ENCODE measurements at regions of chr11 and their contacts with region 1.

Region 1: DNA sequence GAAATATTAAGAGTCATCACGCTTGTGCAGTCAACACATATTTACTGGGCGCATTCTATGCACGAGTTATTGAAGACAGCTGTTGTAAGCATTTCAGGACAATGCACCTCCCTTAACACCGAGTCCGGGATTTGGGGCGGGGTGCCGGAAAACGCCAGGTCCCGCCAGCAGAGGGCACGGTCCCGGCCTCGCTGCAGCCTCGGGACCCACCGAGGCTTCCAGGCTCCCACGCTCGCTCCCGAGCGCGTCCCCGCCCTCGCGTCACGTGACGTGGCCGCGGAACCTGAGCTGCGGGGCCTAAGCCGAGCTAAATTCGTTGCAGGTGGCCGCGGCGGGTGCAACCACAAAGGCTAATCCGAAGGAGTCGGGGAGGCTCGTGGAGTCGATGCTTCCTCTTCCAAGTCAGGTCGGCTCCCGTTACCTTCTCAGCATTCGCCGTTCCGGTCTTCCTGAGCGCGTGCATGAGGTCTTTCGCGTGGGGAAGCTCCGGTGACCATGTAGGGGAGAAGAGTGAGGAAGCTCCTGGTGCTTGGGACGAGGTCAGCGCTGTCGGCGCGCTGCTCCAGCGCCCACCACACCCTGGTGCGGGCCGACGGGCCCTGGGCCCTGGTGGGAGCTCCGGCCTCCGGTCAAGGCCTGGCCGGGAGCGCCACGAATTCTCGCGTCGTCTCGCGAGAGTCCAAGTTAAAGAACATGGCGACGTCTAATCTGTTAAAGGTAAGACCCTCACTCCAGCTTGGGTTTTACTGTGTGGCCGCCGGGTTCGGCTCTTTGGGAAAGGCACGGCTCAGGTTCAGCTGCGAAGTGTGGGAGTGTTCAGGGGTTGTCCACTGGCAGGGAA is at the start of gene CUL5:
- DNase-seq: peak; percentile 95
- ATAC-seq: peak; percentile 91
- H3K4me3 ChIP-seq: peak within 1 kb of the TSS; percentile 79 to 100 (median 99)
- H3K4me3 Mint-ChIP-seq: peak within 1 kb of the TSS; percentile 99
- H3K27ac ChIP-seq: peak within 1 kb of the TSS; percentile 95 to 97
- H3K27ac Mint-ChIP-seq: peak within 1 kb of the TSS; percentile 98
- H3K4me1 ChIP-seq: peaks cover 18 to 20% of the 10 kb centered on the region in 2 donors
- H3K4me1 Mint-ChIP-seq: peaks cover 26% of the 10 kb centered on the region
- H3K27me3 ChIP-seq: no peaks in the 10 kb centered on the region
- H3K27me3 Mint-ChIP-seq: no peaks in the 10 kb centered on the region
- CTCF ChIP-seq: peak; percentile 80
- total RNA-seq, gene CUL5: 44.1 and 47.0 TPM in 2 replicates

Region 2: DNA sequence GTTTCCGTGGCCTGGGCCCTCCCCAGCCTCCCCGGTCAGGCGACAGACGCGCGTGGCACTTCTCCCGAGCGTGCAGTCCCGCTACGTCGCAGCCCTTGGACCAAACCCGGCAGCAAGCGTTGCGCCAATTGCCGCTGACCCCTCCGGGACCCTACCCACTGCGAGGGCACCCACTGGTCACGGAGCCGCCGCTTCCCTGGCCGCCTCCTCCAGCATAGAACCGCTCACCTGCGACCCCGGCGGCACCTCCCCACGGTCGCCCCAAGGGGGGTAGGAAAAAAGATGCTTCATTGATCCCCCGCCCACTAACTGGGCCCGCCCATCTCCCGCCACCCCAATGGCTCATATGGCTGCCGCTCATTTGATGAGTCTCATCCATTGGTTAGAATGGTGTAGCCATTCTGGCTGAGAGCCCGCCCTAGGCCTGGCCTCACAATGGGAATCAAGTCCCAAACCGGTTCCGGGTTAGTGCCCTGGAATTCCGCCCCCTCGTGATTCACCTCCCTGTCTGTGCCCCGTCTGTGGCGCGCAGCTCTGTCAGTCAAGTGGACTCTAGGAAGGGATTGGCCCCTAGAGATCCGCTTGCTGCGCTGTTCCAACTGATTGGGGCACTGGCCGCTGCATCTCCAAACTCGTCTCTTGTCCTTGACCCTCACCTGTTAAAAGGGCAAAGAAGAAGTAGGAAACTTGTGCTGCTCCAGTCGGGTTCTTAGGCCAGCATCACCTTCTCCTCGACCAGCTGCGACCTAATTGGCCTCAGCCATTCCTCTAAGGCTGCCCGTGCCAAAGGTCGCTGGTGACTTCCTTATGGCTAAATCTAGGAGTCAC is 1986.7 kb before region 1 on chr11 and contains the start of gene MSANTD4:
- CTCF ChIA-PET with region 1: no interaction called
- POLR2A ChIA-PET with region 1: no interaction called
- intact Hi-C with region 1: loop called (anchors 5 kb)
- DNase-seq: peak; percentile 96
- ATAC-seq: peak; percentile 96
- H3K4me3 ChIP-seq: peak within 1 kb of the TSS; percentile 66 to 96 (median 82)
- H3K4me3 Mint-ChIP-seq: peak within 1 kb of the TSS; percentile 91
- H3K27ac ChIP-seq: peak within 1 kb of the TSS; percentile 71 to 83
- H3K27ac Mint-ChIP-seq: peak within 1 kb of the TSS; percentile 86
- H3K4me1 ChIP-seq: peaks cover 11 to 17% of the 10 kb centered on the region in 2 donors
- H3K4me1 Mint-ChIP-seq: peaks cover 42% of the 10 kb centered on the region
- H3K27me3 ChIP-seq: no peaks in the 10 kb centered on the region
- H3K27me3 Mint-ChIP-seq: no peaks in the 10 kb centered on the region
- CTCF ChIP-seq: peak; percentile 10
- total RNA-seq, gene MSANTD4: 20.0 and 20.8 TPM in 2 replicates

Region 3: GRCh38 chr11:107858217-107859070 is 150.4 kb before region 1 on chr11 and contains the start of gene SLC35F2:
- CTCF ChIA-PET with region 1: no interaction called
- POLR2A ChIA-PET with region 1: no interaction called
- intact Hi-C with region 1: loop called (anchors 2 kb)
- DNase-seq: peak; percentile 88
- ATAC-seq: peak; percentile 93
- H3K4me3 ChIP-seq: peak within 1 kb of the TSS; percentile 63 to 83 (median 78)
- H3K4me3 Mint-ChIP-seq: peak within 1 kb of the TSS; percentile 99
- H3K27ac ChIP-seq: peak within 1 kb of the TSS; percentile 61 to 77
- H3K27ac Mint-ChIP-seq: peak within 1 kb of the TSS; percentile 94
- H3K4me1 ChIP-seq: peaks cover 14 to 26% of the 10 kb centered on the region in 2 donors
- H3K4me1 Mint-ChIP-seq: peaks cover 29% of the 10 kb centered on the region
- H3K27me3 ChIP-seq: no peaks in the 10 kb centered on the region
- H3K27me3 Mint-ChIP-seq: no peaks in the 10 kb centered on the region
- CTCF ChIP-seq: peak; percentile 34
- total RNA-seq, gene SLC35F2: 9.4 and 10.9 TPM in 2 replicates

Region 4: GRCh38 chr11:107996006-107996776 is 12.7 kb before region 1 on chr11:
- CTCF ChIA-PET with region 1: interaction called, 10 read pairs
- POLR2A ChIA-PET with region 1: no interaction called
- intact Hi-C with region 1: no loop called
- DNase-seq: no peak
- ATAC-seq: no peak
- H3K4me3 ChIP-seq: no peak overlapping the region
- H3K4me3 Mint-ChIP-seq: no peak overlapping the region
- H3K27ac ChIP-seq: no peak overlapping the region
- H3K27ac Mint-ChIP-seq: no peak overlapping the region
- H3K4me1 ChIP-seq: no peaks in the 10 kb centered on the region
- H3K4me1 Mint-ChIP-seq: no peaks in the 10 kb centered on the region
- H3K27me3 ChIP-seq: peaks cover 0 to 4% (median 0%) of the 10 kb centered on the region in 4 experiments
- H3K27me3 Mint-ChIP-seq: peaks cover 17% of the 10 kb centered on the region
- CTCF ChIP-seq: no peak

Region 5: GRCh38 chr11:108647701-108648527 is 639.0 kb after region 1 on chr11:
- CTCF ChIA-PET with region 1: interaction called, 10 read pairs
- POLR2A ChIA-PET with region 1: no interaction called
- intact Hi-C with region 1: loop called (anchors 2 kb)
- DNase-seq: peak; percentile 66
- ATAC-seq: peak; percentile 70
- H3K4me3 ChIP-seq: no peak overlapping the region
- H3K4me3 Mint-ChIP-seq: no peak overlapping the region
- H3K27ac ChIP-seq: no peak overlapping the region
- H3K27ac Mint-ChIP-seq: no peak overlapping the region
- H3K4me1 ChIP-seq: no peaks in the 10 kb centered on the region
- H3K4me1 Mint-ChIP-seq: no peaks in the 10 kb centered on the region
- H3K27me3 ChIP-seq: peaks cover 0 to 7% (median 0%) of the 10 kb centered on the region in 4 experiments
- H3K27me3 Mint-ChIP-seq: peaks cover 8% of the 10 kb centered on the region
- CTCF ChIP-seq: peak; percentile 71

Measured in B cell (primary cell).